Panc1 (cell line): ENCODE measurements at regions of chr15 and their contacts with region 1.

Region 1: GRCh38 chr15:90394748-90395442 is 6.9 kb downstream of the IQGAP1 start:
- DNase-seq: no peak
- ATAC-seq: peak; percentile 59
- H3K4me3 ChIP-seq: no peak overlapping the region
- H3K27ac ChIP-seq: peak overlapping the region; percentile 83
- H3K4me1 ChIP-seq: peaks cover 69% of the 10 kb centered on the region
- H3K27me3 ChIP-seq: no peaks in the 10 kb centered on the region
- CTCF ChIP-seq: no peak

Region 2: GRCh38 chr15:90375071-90375470 is 19.8 kb before region 1 on chr15:
- CTCF ChIA-PET with region 1: no interaction called
- POLR2A ChIA-PET with region 1: no interaction called
- in situ Hi-C with region 1: no loop called
- intact Hi-C with region 1: no loop called
- DNase-seq: no peak
- ATAC-seq: no peak
- H3K4me3 ChIP-seq: no peak overlapping the region
- H3K27ac ChIP-seq: no peak overlapping the region
- H3K4me1 ChIP-seq: no peaks in the 10 kb centered on the region
- H3K27me3 ChIP-seq: no peaks in the 10 kb centered on the region
- CTCF ChIP-seq: no peak

Region 3: DNA sequence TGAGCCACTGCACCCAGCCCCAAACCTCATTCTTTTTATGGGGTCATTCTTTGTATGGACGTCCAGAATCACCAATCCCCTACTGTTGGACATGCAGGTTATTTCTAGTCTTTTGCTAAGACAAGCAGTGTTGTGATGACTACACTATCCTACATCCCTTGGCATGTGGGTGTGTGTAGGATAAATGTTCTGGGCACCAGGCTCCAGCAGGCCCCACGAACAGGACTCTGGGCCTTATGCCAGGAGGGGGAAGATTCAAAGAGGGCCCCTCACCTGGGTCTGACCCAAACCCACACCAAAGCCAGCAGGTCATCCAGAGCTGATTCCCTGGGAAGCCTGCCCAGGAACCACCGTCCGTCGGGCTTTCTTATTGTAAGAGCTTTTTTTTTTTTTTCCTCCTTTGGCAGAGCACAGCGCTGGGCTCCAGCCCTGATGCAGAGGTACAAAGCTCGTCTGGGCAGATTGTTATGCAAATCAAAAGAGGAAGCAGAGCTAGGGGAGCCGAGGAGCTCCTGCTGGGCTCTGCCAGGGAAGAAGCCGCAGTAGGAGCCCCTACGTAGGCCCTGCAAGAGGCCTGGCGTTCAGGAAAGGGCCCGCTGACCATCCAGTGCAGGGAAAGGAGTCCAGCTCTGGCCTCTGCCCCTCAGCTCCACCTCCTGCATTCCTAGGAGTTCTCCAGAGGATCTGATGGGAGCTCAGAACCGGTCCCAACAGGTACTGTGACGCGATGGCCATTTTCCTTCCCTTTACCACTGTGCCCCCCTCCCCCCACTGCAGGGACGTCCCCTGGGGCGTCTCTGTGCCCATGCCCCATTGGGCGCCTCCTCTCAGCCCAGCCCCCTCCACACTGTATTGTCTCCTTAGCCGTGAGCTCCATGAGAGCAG is 444.5 kb after region 1 on chr15:
- CTCF ChIA-PET with region 1: no interaction called
- POLR2A ChIA-PET with region 1: interaction called, 27 read pairs
- in situ Hi-C with region 1: no loop called
- intact Hi-C with region 1: no loop called
- DNase-seq: no peak
- ATAC-seq: 0 out of 2 replicates have a peak, but pooled peaks have one; percentile 29
- H3K4me3 ChIP-seq: no peak overlapping the region
- H3K27ac ChIP-seq: no peak overlapping the region
- H3K4me1 ChIP-seq: no peaks in the 10 kb centered on the region
- H3K27me3 ChIP-seq: no peaks in the 10 kb centered on the region
- CTCF ChIP-seq: no peak